ENCODE measurements at regions of chr1 and their contacts with region 1.

Region 1: GRCh38 chr1:150813058-150813707 is 5.1 kb upstream of the CTSK start:
- DNase-seq: peak; percentile 74
- H3K4me3 Mint-ChIP-seq: no peak overlapping the region
- H3K27ac Mint-ChIP-seq: no peak overlapping the region
- H3K4me1 Mint-ChIP-seq: no peaks in the 10 kb centered on the region
- H3K27me3 Mint-ChIP-seq: no peaks in the 10 kb centered on the region
- CTCF ChIP-seq: peak; percentile 94

Region 2: DNA sequence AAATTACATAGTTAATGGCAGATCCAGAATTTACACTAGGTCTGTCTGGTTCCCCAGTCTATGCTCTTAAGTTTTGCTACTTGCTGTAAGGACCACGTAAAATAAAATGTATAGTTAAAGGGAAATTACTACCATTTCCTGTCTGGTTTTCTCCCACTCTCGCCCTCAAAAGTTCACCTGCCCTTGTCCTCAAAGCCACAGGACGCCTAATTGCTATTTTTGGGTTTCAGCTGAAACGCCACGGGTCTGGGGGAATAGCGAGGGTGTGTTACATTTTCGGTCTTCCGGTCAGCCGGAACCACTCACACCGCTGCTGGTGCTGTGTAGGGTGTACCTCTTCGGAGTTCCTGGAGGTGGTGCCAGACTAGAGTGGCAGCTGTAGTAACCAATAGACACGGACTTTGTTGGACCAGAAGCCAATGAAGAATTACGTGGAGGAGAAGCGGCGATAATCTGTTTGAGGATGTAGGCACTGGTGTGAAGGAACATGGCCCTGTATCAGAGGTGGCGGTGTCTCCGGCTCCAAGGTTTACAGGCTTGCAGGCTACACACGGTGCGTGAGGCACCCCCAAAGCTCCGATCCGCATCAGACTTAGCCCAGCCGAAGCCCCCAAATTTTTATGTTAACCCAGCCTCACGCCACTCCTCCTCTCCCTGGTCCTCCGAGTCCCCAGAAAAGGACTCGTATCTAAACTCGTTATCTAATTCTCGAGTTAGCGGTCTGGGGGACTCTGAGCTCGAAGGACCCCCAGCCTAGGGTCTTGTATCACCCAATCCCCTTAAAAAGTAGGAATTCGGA is 326.0 kb before region 1 on chr1 and contains the start of gene TARS2:
- CTCF ChIA-PET with region 1: interaction called, 3 read pairs
- POLR2A ChIA-PET with region 1: no interaction called
- intact Hi-C with region 1: loop called (anchors 10 kb)
- DNase-seq: peak; percentile 100
- H3K4me3 Mint-ChIP-seq: peak within 1 kb of the TSS; percentile 99
- H3K27ac Mint-ChIP-seq: peak within 1 kb of the TSS; percentile 93
- H3K4me1 Mint-ChIP-seq: peaks cover 14% of the 10 kb centered on the region
- H3K27me3 Mint-ChIP-seq: no peaks in the 10 kb centered on the region
- CTCF ChIP-seq: no peak
- total RNA-seq, gene TARS2: 43.1 and 65.3 TPM in 2 replicates

Region 3: GRCh38 chr1:150567717-150568593 is 245.2 kb before region 1 on chr1:
- CTCF ChIA-PET with region 1: interaction called, 5 read pairs
- POLR2A ChIA-PET with region 1: interaction called, 6 read pairs
- intact Hi-C with region 1: loop called (anchors 2 kb)
- DNase-seq: peak; percentile 100
- H3K4me3 Mint-ChIP-seq: peak overlapping the region; percentile 52
- H3K27ac Mint-ChIP-seq: peak overlapping the region; percentile 99
- H3K4me1 Mint-ChIP-seq: peaks cover 64% of the 10 kb centered on the region
- H3K27me3 Mint-ChIP-seq: no peaks in the 10 kb centered on the region
- CTCF ChIP-seq: peak; percentile 6

Region 4: DNA sequence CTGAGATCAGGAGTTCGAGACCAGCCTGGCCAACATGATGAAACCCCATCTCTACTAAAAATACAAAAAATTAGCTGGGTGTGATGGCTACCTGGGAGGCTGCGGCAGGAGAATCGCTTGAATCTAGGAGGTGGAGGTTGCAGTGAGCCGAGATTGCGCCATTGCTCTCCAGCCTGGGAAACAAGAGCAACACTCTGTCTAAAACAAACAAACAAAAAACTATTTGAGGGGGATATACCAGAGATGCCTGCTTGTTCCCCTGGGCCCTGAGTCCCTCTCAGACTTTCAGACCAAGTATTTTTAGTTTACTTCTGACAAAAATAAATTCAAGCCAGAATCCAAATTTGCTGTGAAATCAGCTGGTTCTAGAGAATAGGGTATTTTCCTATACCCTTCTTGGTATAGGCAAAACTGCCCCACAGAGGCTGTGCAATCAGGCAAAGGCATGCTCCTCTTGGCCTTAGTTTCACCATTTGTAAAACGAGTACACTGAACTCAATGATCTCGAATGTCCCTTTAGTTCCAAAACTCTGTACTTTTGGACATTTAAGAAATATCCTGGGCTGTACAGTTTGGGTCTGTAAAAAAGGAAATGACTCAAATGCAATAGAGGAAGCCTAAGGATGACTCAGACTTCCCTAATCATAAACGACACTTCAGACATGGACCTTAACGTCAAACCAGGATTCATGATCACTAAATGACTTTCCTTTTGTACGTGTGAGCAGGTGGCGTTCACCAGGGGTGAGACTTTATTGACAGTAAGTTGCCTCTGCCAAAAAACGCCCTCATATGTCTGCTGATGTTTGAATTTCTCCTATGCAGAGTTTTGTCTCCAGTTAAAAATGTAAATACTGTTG is 199.9 kb before region 1 on chr1:
- CTCF ChIA-PET with region 1: interaction called, 12 read pairs
- POLR2A ChIA-PET with region 1: interaction called, 3 read pairs
- intact Hi-C with region 1: no loop called
- DNase-seq: peak; percentile 98
- H3K4me3 Mint-ChIP-seq: peak overlapping the region; percentile 55
- H3K27ac Mint-ChIP-seq: peak overlapping the region; percentile 84
- H3K4me1 Mint-ChIP-seq: peaks cover 55% of the 10 kb centered on the region
- H3K27me3 Mint-ChIP-seq: no peaks in the 10 kb centered on the region
- CTCF ChIP-seq: no peak

Region 5: DNA sequence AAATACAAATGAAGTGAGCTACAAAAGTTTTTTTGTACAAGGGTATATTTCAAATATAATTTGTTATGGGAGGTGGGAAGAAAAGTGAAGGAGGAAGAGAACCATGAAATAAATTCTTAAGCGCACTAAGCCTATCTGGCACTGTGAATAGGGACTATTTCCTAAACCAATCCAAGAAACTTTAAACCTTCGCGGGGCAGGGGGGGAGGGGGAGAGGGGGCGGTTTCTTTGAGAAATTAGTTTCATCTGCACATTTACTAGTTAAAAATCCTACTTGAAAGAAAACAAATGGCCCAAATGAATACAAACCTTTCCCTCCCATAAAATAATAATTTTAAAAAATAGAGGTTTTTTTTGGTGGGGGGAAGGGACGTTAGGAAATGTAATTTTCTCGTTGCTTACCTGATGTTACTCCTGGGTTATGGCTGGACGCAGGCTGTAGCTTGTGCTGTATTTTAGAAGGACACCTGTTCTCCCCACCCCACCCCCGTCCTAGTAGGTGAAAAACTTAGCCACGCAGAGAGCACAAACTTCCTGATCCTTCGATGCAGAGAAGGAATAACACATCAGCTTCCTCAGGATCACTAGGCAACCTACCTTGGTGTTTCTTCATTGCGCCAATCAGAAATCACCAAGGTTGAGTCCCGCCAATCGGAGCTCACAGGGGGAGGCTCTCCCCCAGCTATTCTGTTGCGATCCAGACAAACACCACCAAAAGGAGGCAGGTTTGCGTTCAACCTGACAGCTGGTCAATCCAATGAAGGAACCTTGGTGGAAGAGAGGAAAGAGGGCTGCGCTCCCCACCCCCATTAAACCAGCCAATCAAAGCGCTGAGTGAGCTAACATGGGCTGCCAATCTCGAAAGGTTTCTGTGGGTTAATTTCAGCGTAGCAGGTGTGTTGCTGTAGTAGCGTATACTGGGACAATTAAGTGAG is 116.3 kb before region 1 on chr1 and contains the start of gene GOLPH3L:
- CTCF ChIA-PET with region 1: interaction called, 12 read pairs
- POLR2A ChIA-PET with region 1: interaction called, 16 read pairs
- intact Hi-C with region 1: loop called (anchors 1 kb)
- DNase-seq: peak; percentile 100
- H3K4me3 Mint-ChIP-seq: peak within 1 kb of the TSS; percentile 88
- H3K27ac Mint-ChIP-seq: peak within 1 kb of the TSS; percentile 95
- H3K4me1 Mint-ChIP-seq: peaks cover 25% of the 10 kb centered on the region
- H3K27me3 Mint-ChIP-seq: no peaks in the 10 kb centered on the region
- CTCF ChIP-seq: no peak
- total RNA-seq, gene GOLPH3L: 68.5 and 76.9 TPM in 2 replicates

Region 6: DNA sequence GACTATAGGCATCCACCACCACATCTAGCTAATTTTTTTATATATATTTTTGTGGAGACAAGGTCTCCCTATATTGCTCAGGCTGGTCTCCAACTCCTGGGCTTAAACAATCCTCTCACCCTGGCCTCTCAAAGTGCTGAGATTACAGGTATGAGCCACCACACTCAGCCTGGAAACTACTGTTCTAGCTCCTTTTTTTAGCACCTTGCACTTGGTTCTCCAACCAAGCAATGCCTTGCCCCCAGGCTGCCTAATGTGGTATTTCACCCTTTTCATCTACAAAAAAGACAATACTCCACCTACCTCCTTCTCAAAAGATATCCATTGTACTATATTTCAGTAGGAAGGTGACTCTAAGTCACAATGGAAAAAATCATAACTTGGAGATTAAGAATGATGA is 56.5 kb after region 1 on chr1:
- CTCF ChIA-PET with region 1: interaction called, 10 read pairs
- POLR2A ChIA-PET with region 1: interaction called, 3 read pairs
- intact Hi-C with region 1: no loop called
- DNase-seq: no peak
- H3K4me3 Mint-ChIP-seq: no peak overlapping the region
- H3K27ac Mint-ChIP-seq: no peak overlapping the region
- H3K4me1 Mint-ChIP-seq: peaks cover 23% of the 10 kb centered on the region
- H3K27me3 Mint-ChIP-seq: no peaks in the 10 kb centered on the region
- CTCF ChIP-seq: no peak